RWPE1 (cell line): ENCODE measurements at regions of chr7 and their contacts with region 1.

Region 1: GRCh38 chr7:140003913-140004382 is 58.8 kb downstream of the PARP12 start:
- DNase-seq: peak; percentile 42
- H3K27ac ChIP-seq: no peak overlapping the region
- CTCF ChIP-seq: peak; percentile 63

Region 2: GRCh38 chr7:139645572-139646523 is 358.1 kb before region 1 on chr7:
- CTCF ChIA-PET with region 1: interaction called, 10 read pairs
- POLR2A ChIA-PET with region 1: no interaction called
- DNase-seq: peak; percentile 44
- H3K27ac ChIP-seq: no peak overlapping the region
- CTCF ChIP-seq: peak; percentile 94